ENCODE measurements at regions of chr9 and their contacts with region 1.

Region 1: DNA sequence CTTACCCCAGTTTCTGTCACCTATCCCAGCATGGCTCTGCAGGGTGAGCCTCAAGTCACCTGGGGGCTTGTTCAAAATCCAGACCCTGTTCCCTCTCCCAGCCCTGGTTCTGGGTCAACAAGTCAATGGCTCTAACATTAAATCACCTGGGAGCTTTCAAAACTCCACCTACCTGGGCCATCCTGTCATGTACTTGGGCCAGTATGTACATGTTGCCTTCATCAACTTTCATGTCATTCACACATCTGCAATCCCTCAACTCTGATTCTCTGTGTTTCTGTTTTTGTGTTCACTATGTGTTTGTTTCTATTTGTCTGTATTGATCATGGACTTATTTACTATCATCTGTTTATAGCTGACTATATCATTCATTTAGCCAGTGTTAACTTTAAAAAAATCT is 2.1 kb upstream of the SH3GLB2 start:
- DNase-seq: no peak
- ATAC-seq: no peak
- H3K4me3 ChIP-seq: no peak overlapping the region
- H3K27ac ChIP-seq: no peak overlapping the region
- H3K4me1 ChIP-seq: peaks cover 8% of the 10 kb centered on the region
- H3K27me3 ChIP-seq: no peaks in the 10 kb centered on the region
- CTCF ChIP-seq: no peak
- EP300 ChIP-seq: no peak
- POLR2A ChIP-seq: no peak
- RAD21 ChIP-seq: no peak

Region 2: DNA sequence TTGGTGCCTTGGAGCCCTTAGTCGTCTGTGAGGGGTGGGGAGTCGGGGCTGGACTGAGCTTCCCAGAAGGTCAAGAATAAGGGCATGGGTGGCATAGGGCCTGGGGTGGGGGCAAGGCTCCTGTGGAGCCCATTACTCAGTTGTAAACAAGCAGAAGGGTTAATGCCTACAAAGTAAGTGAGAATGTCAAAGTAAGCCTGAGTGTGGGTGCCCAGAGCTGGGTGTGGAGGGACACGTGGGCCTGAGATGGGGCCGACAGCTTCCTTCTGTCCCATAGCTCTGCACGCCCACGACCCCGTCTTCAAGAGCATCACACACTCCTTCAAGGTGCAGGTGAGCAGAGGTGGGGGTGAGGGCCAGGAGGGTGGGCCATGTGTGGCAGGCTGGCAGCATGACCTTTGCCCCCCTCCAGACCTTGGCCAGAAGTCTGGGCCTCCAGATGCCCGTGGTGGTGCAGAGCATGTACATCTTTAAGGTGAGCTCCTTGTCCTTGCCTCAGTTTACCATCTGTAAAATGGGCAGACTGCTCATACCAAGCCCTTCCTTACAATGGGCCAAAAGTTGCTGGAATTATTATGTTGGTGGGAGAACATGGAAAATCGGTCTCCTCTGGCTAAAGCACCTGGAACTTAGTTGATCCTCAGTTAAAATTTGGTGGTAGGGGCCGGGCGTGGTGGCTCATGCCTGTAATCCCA is 93.9 kb before region 1 on chr9:
- CTCF ChIA-PET with region 1: interaction called, 3 read pairs
- POLR2A ChIA-PET with region 1: interaction called, 10 read pairs
- RAD21 ChIA-PET with region 1: no interaction called
- SMC1A ChIA-PET with region 1: no interaction called
- in situ Hi-C with region 1: no loop called
- intact Hi-C with region 1: no loop called
- DNase-seq: no peak
- ATAC-seq: no peak
- H3K4me3 ChIP-seq: no peak overlapping the region
- H3K27ac ChIP-seq: no peak overlapping the region
- H3K4me1 ChIP-seq: no peaks in the 10 kb centered on the region
- H3K27me3 ChIP-seq: no peaks in the 10 kb centered on the region
- CTCF ChIP-seq: no peak
- EP300 ChIP-seq: no peak
- POLR2A ChIP-seq: no peak
- RAD21 ChIP-seq: no peak

Measured in GM12878 (cell line).